Astrocyte of the cerebellum (primary cell): ENCODE measurements at regions of chr9 and their contacts with region 1.

Region 1: GRCh38 chr9:76374702-76375559 is 19.3 kb downstream of the RFK start:
- DNase-seq: no peak
- H3K4me3 ChIP-seq: no peak overlapping the region
- CTCF ChIP-seq: no peak

Region 2: DNA sequence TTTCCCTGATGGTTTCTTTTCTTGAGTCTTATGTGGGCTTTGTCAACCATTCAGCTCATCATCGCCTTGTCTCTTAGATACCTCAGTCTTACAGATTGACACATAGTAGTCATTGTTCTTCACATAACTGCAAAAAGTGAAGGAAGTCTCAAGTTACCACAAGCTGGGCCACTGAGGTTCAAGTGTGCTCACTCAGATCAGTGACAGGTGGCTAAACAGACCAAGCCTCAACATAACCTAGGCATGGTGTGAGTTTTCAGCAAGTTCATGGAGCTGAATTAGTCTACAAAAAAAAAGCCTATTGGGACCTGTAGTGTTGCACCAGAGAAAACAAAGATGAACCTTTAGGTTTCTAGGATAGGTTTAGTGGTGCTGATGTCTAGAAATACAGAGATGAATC is 38.9 kb before region 1 on chr9:
- in situ Hi-C with region 1: loop called (anchors 5 kb)
- DNase-seq: no peak
- H3K4me3 ChIP-seq: no peak overlapping the region
- CTCF ChIP-seq: no peak